ENCODE measurements at regions of chr2 and their contacts with region 1.

Region 1: DNA sequence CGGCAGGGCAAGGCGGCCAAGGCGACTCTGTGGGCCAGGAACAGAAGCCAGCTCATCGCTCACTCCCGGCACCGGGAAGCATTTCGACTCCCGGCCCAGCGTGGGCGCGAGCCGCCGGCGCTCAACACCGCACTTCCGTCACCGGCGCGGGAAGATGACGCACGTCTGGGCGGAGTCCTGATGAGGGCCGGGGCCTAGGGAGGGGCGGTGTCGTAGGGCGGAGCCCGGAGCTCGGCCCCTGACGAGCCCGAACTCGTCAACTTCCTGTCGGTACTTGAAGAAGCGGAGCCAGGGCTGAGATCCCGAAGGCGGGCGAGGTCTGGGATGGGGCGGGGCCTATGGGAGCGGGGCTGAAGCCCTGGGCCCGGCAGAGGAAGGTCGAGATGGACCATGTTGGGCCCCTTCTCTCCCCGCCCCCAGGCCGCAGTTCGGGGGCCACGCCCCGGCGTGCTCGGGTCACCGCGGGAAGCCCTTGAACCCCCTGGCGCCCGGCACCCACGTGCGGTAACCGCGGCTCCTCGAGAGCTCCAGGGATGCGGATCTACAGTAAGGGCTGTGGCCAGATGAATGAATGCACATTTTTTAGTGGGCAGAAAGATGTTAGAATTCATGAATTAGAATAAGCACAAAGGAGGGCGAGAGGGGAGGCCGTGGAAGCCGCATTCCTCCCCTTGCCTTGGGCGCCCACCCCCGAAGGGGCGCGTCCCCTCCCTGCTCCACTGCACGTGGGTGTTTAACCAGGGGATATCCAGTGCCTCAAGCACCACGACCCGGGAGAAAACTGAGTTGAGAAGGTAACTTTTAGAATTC is at the start of gene RNASEH1:
- DNase-seq: peak; percentile 98 to 99 (median 98)
- H3K4me3 ChIP-seq: peak within 1 kb of the TSS; percentile 83 to 96 (median 91)
- H3K27ac ChIP-seq: peak within 1 kb of the TSS; percentile 84 to 95
- H3K4me1 ChIP-seq: peaks cover 6 to 21% (median 17%) of the 10 kb centered on the region in 4 experiments
- H3K27me3 ChIP-seq: no peaks in the 10 kb centered on the region

Region 2: GRCh38 chr2:3575534-3576262 is 17.3 kb after region 1 on chr2:
- CTCF ChIA-PET with region 1: interaction called, 4 read pairs
- POLR2A ChIA-PET with region 1: interaction called, 15 read pairs
- DNase-seq: peak in 2 of 3 donors; percentile 17 to 38
- H3K4me3 ChIP-seq: peak overlapping the region; percentile 66 to 98 (median 83)
- H3K27ac ChIP-seq: peak overlapping the region; percentile 90 to 97
- H3K4me1 ChIP-seq: peaks cover 0 to 30% (median 22%) of the 10 kb centered on the region in 4 experiments
- H3K27me3 ChIP-seq: no peaks in the 10 kb centered on the region

Region 3: DNA sequence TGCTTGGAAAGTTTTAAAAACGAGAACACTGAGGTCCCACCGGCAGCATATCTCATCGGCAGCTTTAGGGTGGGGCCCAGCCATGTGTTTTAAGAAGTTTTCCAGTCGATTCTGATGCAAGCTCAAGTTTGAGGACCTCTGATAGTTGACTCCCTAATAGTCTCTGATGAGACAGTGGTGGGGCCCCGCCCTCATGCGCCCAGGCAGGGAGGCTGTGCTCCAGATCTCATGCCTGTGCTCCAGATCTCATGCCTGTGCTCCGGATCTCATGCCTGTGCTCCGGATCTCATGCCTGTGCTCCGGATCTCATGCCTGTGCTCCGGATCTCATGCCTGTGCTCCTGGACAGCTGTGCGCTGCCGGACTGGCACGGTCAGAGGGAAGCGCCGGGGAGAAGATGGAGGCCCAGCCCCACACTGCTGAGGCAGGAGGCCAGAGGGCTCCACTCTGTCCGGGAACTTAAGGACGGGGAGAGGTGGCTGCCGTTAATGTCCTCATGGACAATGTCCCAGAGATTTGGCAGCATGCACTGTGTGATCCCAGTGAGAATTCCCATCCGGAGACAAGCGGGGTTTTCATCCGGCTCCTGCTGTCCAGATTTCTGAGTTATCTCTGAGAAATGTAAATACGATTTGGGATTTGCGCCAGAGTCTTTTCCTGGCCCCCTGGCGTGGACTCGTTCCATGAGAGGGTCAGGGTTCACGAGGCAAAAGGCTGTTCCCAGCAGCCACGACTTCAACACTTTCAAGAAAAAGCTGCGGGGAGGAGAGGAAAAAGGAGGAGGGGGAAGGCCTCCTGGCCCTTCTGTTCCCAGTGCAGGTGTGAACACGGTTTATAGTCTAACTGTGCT is 27.1 kb after region 1 on chr2:
- CTCF ChIA-PET with region 1: no interaction called
- POLR2A ChIA-PET with region 1: interaction called, 12 read pairs
- DNase-seq: no peak
- H3K4me3 ChIP-seq: no peak overlapping the region
- H3K27ac ChIP-seq: no peak overlapping the region
- H3K4me1 ChIP-seq: no peaks in the 10 kb centered on the region
- H3K27me3 ChIP-seq: no peaks in the 10 kb centered on the region

Region 4: GRCh38 chr2:3608373-3609278 is 50.2 kb after region 1 on chr2:
- CTCF ChIA-PET with region 1: no interaction called
- POLR2A ChIA-PET with region 1: no interaction called
- DNase-seq: no peak
- H3K4me3 ChIP-seq: no peak overlapping the region
- H3K27ac ChIP-seq: no peak overlapping the region
- H3K4me1 ChIP-seq: peaks cover 0 to 6% (median 0%) of the 10 kb centered on the region in 4 experiments
- H3K27me3 ChIP-seq: no peaks in the 10 kb centered on the region

Measured in common myeloid progenitor, CD34-positive (primary cell).